ENCODE measurements at regions of chr6 and their contacts with region 1.

Region 1: GRCh38 chr6:119349323-119350042 is at the start of gene MAN1A1:
- DNase-seq: peak; percentile 85 to 93 (median 91)
- H3K4me3 ChIP-seq: peak within 1 kb of the TSS; percentile 73 to 81
- H3K4me3 Mint-ChIP-seq: peak within 1 kb of the TSS; percentile 86 to 98 (median 94)
- H3K27ac ChIP-seq: peak within 1 kb of the TSS; percentile 88
- H3K27ac Mint-ChIP-seq: peak within 1 kb of the TSS; percentile 83 to 90 (median 88)
- H3K4me1 ChIP-seq: peaks cover 33% of the 10 kb centered on the region
- H3K4me1 Mint-ChIP-seq: peaks cover 31 to 51% (median 37%) of the 10 kb centered on the region in 4 donors
- H3K27me3 ChIP-seq: no peaks in the 10 kb centered on the region
- H3K27me3 Mint-ChIP-seq: no peaks in the 10 kb centered on the region
- total RNA-seq, gene MAN1A1: 12.3 TPM

Region 2: DNA sequence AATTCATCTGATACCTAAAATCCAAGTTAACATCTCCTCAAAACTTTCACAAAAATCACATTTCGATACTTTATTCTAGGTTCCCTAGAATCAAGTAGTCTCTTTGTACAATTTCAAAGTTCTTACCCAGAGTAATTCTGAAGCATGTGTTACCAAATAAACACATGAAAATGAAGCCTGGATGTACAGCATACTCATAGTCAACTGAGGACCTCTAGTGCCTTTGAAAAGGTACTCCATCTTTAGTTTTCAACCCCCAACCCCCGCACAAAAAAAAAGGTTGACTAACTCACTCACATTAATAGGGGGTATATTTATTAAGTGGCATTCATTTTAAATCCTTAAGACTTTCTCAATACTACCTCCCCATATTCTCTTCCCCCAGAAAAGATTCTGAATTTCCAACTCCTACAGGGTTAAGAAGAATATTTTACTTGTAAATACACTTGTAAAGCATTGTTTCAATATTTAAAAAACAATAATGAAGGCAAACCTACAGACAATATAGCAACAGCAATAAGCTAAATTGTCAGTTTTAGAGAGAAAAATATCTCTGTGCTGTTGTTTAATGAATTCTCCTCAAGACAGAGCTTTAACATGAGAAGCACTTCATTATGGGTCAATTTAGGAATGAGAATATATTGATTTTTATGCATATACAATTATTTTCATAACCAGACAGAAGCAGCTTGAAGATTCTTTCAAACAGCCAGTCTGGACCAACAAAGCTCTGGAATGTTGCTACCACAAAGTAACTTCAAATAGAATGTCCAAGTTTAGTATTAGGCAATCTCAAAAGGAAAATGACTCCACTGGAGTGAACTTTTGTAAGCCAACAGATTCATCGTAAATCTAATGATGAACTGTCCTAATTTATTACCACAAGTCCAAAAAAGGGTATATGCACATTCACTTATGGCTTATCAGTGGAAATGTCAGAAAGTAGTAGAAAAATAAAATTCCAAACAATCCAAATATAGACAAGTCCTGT is 798.1 kb before region 1 on chr6:
- CTCF ChIA-PET with region 1: no interaction called
- POLR2A ChIA-PET with region 1: no interaction called
- intact Hi-C with region 1: loop called (anchors 5 kb)
- DNase-seq: peak in 4 of 5 donors; percentile 30 to 54 (median 41)
- H3K4me3 ChIP-seq: no peak overlapping the region
- H3K4me3 Mint-ChIP-seq: peak overlapping the region in 1 of 8 donors; percentile 57
- H3K27ac ChIP-seq: no peak overlapping the region
- H3K27ac Mint-ChIP-seq: peak overlapping the region in 3 of 7 donors; percentile 52 to 74 (median 72)
- H3K4me1 ChIP-seq: peaks cover 23% of the 10 kb centered on the region
- H3K4me1 Mint-ChIP-seq: peaks cover 18 to 37% (median 31%) of the 10 kb centered on the region in 4 donors
- H3K27me3 ChIP-seq: no peaks in the 10 kb centered on the region
- H3K27me3 Mint-ChIP-seq: no peaks in the 10 kb centered on the region

Region 3: GRCh38 chr6:119078376-119079282 is 270.9 kb before region 1 on chr6 and contains the start of gene FAM184A:
- CTCF ChIA-PET with region 1: no interaction called
- POLR2A ChIA-PET with region 1: no interaction called
- intact Hi-C with region 1: loop called (anchors 2 kb)
- DNase-seq: peak; percentile 81 to 84 (median 82)
- H3K4me3 ChIP-seq: peak within 1 kb of the TSS; percentile 68 to 80
- H3K4me3 Mint-ChIP-seq: peak within 1 kb of the TSS; percentile 90 to 98 (median 96)
- H3K27ac ChIP-seq: peak within 1 kb of the TSS; percentile 38
- H3K27ac Mint-ChIP-seq: peak within 1 kb of the TSS; percentile 90 to 98 (median 95)
- H3K4me1 ChIP-seq: peaks cover 35% of the 10 kb centered on the region
- H3K4me1 Mint-ChIP-seq: peaks cover 30 to 39% (median 33%) of the 10 kb centered on the region in 4 donors
- H3K27me3 ChIP-seq: no peaks in the 10 kb centered on the region
- H3K27me3 Mint-ChIP-seq: no peaks in the 10 kb centered on the region
- total RNA-seq, gene FAM184A: 5.6 to 6.1 TPM

Region 4: GRCh38 chr6:119313937-119314884 is 35.3 kb before region 1 on chr6:
- CTCF ChIA-PET with region 1: interaction called, 14 read pairs
- POLR2A ChIA-PET with region 1: interaction called, 45 read pairs
- intact Hi-C with region 1: loop called (anchors 2 kb)
- DNase-seq: peak; percentile 38 to 50 (median 47)
- H3K4me3 ChIP-seq: peak overlapping the region in 1 of 2 donors; percentile 4
- H3K4me3 Mint-ChIP-seq: peak overlapping the region; percentile 53 to 85 (median 70)
- H3K27ac ChIP-seq: peak overlapping the region; percentile 56
- H3K27ac Mint-ChIP-seq: peak overlapping the region; percentile 73 to 99 (median 94)
- H3K4me1 ChIP-seq: peaks cover 52% of the 10 kb centered on the region
- H3K4me1 Mint-ChIP-seq: peaks cover 33 to 72% (median 45%) of the 10 kb centered on the region in 4 donors
- H3K27me3 ChIP-seq: no peaks in the 10 kb centered on the region
- H3K27me3 Mint-ChIP-seq: no peaks in the 10 kb centered on the region

Region 5: GRCh38 chr6:119333707-119334295 is 15.7 kb before region 1 on chr6:
- CTCF ChIA-PET with region 1: interaction called, 61 read pairs
- POLR2A ChIA-PET with region 1: interaction called, 11 read pairs
- intact Hi-C with region 1: no loop called
- DNase-seq: peak in 4 of 5 donors; percentile 29 to 44 (median 37)
- H3K4me3 ChIP-seq: no peak overlapping the region
- H3K4me3 Mint-ChIP-seq: no peak overlapping the region
- H3K27ac ChIP-seq: no peak overlapping the region
- H3K27ac Mint-ChIP-seq: no peak overlapping the region
- H3K4me1 ChIP-seq: peaks cover 5% of the 10 kb centered on the region
- H3K4me1 Mint-ChIP-seq: peaks cover 6 to 31% (median 26%) of the 10 kb centered on the region in 4 donors
- H3K27me3 ChIP-seq: no peaks in the 10 kb centered on the region
- H3K27me3 Mint-ChIP-seq: no peaks in the 10 kb centered on the region